ENCODE measurements at regions of chr16 and their contacts with region 1.

Region 1: GRCh38 chr16:68040507-68041288 is 17.6 kb downstream of the DUS2 start:
- DNase-seq: peak; percentile 92
- ATAC-seq: peak; percentile 99
- H3K4me3 Mint-ChIP-seq: no peak overlapping the region
- H3K27ac Mint-ChIP-seq: peak overlapping the region; percentile 81
- H3K4me1 Mint-ChIP-seq: peaks cover 31% of the 10 kb centered on the region
- H3K27me3 Mint-ChIP-seq: no peaks in the 10 kb centered on the region

Region 2: DNA sequence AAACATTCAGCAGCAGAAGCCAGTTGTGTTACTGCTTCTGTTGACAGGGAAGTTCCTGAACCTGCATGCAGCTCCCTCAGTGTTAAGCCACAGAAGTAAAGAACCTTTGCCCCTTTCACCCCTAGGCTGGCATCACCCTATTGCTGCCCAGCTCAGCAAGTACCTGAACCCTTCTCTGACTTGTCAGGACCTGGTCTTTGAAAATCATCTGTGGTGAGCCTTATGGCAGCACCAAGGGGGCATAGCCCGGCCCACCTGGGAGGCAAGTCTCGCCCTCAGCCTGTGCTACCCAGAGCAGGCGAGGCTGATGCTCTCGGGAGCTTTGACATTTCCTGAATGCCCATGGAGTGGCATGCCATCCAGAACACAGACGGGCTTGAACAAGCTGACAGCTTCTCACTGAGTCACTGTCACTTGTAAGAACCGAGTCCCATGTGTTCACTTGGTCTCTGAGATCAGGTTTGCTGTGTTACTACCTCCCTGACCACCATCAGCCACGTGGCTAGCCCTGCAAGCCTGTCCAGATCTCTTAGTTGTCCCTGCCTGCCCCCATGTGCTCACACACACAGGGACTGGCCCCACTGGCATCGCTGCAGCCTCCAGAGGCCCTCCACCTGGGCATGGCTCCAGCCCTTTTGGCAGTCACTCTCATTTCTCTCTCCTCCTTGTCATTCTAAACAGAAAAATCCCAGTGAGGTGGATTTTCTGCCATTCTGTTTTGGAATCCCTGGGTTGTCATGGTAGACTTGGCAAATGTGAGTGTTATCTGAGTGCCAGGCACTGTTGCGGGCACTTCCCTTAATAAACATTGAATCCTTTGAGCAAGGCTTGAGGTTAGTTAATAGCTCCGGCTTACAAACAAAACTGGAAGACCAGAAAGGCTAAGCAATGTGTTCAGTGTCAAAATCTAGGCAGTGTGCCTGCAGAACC is 398.7 kb before region 1 on chr16:
- CTCF ChIA-PET with region 1: no interaction called
- DNase-seq: no peak
- ATAC-seq: no peak
- H3K4me3 Mint-ChIP-seq: no peak overlapping the region
- H3K27ac Mint-ChIP-seq: no peak overlapping the region
- H3K4me1 Mint-ChIP-seq: peaks cover 15% of the 10 kb centered on the region
- H3K27me3 Mint-ChIP-seq: no peaks in the 10 kb centered on the region

Region 3: DNA sequence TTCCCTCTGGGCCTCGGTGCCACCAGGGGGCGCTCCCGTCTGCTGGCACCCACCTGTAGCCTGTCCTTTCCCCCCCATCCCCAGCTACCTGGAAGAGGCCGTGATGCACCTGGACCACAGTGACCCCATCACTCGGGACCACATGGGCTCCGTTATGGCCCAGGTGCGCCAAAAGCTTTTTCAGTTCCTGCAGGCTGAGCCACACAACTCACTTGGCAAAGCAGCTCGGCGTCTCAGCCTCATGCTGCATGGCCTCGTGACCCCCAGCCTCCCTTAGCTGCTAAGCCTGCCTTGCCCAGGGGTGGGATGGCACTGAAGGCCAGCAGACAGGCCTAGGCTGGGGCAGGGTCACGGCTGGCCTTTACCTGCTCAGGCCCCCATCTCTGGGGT is 156.8 kb before region 1 on chr16:
- CTCF ChIA-PET with region 1: interaction called, 18 read pairs
- DNase-seq: peak; percentile 73
- ATAC-seq: peak; percentile 84
- H3K4me3 Mint-ChIP-seq: no peak overlapping the region
- H3K27ac Mint-ChIP-seq: peak overlapping the region; percentile 46
- H3K4me1 Mint-ChIP-seq: no peaks in the 10 kb centered on the region
- H3K27me3 Mint-ChIP-seq: no peaks in the 10 kb centered on the region

Region 4: DNA sequence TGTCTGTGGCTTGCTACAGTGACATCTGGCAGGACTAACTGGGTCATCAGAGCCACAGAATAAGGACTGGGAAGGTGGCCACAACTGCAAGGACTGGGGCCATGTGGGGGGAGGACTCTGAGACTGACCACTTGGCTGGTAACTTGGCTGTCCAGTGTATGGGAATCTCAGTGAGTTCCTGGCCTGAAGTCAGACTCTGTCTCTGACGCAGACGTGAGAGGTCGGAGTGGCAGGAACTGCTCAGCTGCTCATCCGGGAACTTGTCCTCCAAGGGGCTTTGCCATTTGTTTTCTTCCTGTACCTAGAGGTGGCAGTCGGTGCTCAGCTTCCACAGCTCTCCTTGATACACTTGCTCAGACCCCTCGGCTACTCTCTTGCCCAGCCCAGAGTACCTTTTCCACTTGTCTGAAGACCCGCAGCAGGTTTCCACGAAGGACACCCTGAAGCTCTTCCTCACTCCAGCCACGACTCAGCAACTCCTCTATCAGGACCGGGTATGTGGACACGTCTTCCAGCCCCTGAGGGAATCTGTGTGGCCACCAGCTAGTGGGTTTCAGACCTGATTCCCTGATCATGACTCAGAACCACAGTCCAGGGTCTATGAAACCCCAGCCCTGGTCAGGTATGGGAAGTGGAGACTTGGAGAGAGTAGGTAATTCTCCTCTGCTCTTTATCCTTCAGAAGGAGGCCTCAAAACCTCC is 53.1 kb before region 1 on chr16:
- CTCF ChIA-PET with region 1: interaction called, 22 read pairs
- DNase-seq: no peak
- ATAC-seq: no peak
- H3K4me3 Mint-ChIP-seq: no peak overlapping the region
- H3K27ac Mint-ChIP-seq: no peak overlapping the region
- H3K4me1 Mint-ChIP-seq: peaks cover 29% of the 10 kb centered on the region
- H3K27me3 Mint-ChIP-seq: no peaks in the 10 kb centered on the region

Region 5: DNA sequence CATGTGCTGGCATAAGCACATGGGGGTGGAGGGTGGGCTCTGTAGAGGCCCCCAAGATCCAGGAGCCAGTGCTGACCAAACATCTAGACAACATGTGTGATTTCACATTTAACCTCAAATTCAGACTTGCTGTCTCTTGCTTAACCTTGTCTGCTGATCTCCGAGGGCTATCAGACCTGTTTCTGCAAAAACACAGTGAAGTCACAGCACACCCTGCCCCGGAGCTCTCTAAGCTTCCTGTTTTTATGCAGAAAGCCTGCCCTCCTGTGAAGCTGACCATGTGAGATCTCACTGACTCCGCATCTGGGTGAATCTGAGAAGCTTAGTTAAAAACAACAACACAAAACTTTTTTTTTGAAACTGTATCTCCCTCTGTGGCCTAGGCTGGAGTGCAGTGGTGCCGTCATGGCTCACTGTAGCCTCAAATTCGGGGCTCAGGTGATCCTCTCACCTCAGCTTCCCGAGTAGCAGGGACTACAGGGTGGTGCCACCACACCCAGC is 34.9 kb before region 1 on chr16:
- CTCF ChIA-PET with region 1: interaction called, 12 read pairs
- DNase-seq: peak; percentile 55
- ATAC-seq: peak; percentile 80
- H3K4me3 Mint-ChIP-seq: no peak overlapping the region
- H3K27ac Mint-ChIP-seq: peak overlapping the region; percentile 90
- H3K4me1 Mint-ChIP-seq: peaks cover 14% of the 10 kb centered on the region
- H3K27me3 Mint-ChIP-seq: no peaks in the 10 kb centered on the region

Region 6: DNA sequence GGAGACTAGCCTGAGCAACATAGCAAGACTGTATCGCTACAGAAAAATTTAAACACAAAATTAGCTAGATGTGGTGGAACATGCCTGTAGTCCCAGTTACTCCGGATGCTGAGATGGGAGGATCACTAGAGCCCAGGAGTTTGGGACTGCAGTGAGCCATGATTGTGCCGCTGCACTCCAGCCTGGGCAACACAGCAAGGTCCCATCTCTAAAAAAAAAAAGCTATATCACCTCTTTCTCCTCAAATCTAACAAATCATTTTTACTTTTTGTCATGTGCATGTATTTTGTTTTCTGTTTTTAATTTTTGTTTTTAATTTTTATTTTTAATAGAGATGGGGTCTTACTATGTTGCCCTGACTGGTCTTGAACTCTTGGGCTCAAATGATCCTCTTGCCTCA is 11.7 kb before region 1 on chr16:
- CTCF ChIA-PET with region 1: interaction called, 20 read pairs
- DNase-seq: no peak
- ATAC-seq: no peak
- H3K4me3 Mint-ChIP-seq: no peak overlapping the region
- H3K27ac Mint-ChIP-seq: no peak overlapping the region
- H3K4me1 Mint-ChIP-seq: peaks cover 33% of the 10 kb centered on the region
- H3K27me3 Mint-ChIP-seq: no peaks in the 10 kb centered on the region

Region 7: DNA sequence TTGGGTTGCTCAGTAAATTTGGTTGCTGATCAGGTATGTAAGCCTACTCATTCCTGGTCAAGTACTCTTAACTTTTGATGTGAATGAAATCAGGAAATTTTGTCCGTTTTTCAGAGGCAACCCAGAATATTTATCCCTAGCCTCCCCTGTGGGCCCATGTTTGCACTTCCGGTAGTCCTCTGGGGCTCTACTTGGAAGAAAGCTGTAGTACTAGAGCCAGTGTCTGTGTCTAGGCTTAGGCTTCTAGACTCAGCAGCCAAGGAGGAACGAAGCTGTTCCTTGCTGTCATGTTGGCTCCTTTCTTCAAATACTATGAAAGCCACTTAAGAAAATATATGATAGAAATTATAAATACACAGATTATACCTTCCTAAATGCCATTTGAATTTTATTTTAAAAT is 174.0 kb after region 1 on chr16:
- CTCF ChIA-PET with region 1: no interaction called
- DNase-seq: no peak
- ATAC-seq: no peak
- H3K4me3 Mint-ChIP-seq: no peak overlapping the region
- H3K27ac Mint-ChIP-seq: no peak overlapping the region
- H3K4me1 Mint-ChIP-seq: peaks cover 24% of the 10 kb centered on the region
- H3K27me3 Mint-ChIP-seq: no peaks in the 10 kb centered on the region

Region 8: DNA sequence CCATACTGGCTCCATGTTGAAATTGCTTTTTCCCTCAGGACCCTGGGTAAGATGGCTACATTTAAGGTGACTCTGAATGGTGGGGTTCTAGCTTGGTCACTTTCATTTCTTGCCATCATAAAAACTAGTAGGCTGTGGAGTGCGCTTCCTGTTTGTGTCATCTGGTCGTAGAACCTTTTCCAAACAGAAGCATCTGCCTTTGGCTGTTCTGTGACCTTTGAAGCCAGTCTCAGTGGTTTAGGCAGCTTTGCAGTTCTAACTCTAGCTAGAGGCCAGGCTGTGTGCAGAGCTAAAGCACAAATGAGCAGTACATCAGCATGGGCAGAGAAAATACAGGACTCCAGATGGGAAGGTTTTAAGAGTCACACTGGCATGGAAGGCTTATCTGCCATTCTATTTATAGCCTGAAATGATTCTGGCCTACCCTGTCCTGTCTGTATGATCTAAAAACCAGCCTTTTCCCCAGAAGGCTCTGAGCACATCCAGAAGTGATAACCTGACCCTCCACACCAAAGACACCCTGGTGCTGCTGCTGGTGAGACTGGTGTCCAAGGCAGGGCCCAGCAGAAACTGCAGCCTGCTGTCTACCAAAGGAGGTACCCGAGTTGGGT is 186.6 kb after region 1 on chr16:
- CTCF ChIA-PET with region 1: interaction called, 10 read pairs
- DNase-seq: peak; percentile 65
- ATAC-seq: peak; percentile 70
- H3K4me3 Mint-ChIP-seq: no peak overlapping the region
- H3K27ac Mint-ChIP-seq: peak overlapping the region; percentile 81
- H3K4me1 Mint-ChIP-seq: peaks cover 33% of the 10 kb centered on the region
- H3K27me3 Mint-ChIP-seq: no peaks in the 10 kb centered on the region

Measured in activated CD8-positive, alpha-beta memory T cell treated with anti-CD3 and anti-CD28 coated beads, Interleukin-2, amount 10 ng/mL, durations not matched to agents 7 days and 5 days (primary cell).